Ascending aorta (tissue), 2 donors: ENCODE measurements at regions of chr17 and their contacts with region 1.

Region 1: GRCh38 chr17:81294856-81295680 is at the start of gene SLC38A10:
- DNase-seq: peak; percentile 70 to 95
- H3K4me3 ChIP-seq: peak within 1 kb of the TSS; percentile 84 to 99
- H3K27ac ChIP-seq: peak within 1 kb of the TSS; percentile 88 to 97
- H3K4me1 ChIP-seq: peaks cover 12 to 20% of the 10 kb centered on the region in 2 donors
- H3K27me3 ChIP-seq: no peaks in the 10 kb centered on the region
- CTCF ChIP-seq: no peak
- total RNA-seq, gene SLC38A10: 261 TPM

Region 2: GRCh38 chr17:81253358-81254131 is 41.5 kb before region 1 on chr17:
- intact Hi-C with region 1: loop called (anchors 5 kb)
- DNase-seq: no peak
- H3K4me3 ChIP-seq: no peak overlapping the region
- H3K27ac ChIP-seq: no peak overlapping the region
- H3K4me1 ChIP-seq: peaks cover 0 to 13% of the 10 kb centered on the region in 2 donors
- H3K27me3 ChIP-seq: no peaks in the 10 kb centered on the region
- CTCF ChIP-seq: peak; percentile 75 to 82 (median 76)

Region 3: DNA sequence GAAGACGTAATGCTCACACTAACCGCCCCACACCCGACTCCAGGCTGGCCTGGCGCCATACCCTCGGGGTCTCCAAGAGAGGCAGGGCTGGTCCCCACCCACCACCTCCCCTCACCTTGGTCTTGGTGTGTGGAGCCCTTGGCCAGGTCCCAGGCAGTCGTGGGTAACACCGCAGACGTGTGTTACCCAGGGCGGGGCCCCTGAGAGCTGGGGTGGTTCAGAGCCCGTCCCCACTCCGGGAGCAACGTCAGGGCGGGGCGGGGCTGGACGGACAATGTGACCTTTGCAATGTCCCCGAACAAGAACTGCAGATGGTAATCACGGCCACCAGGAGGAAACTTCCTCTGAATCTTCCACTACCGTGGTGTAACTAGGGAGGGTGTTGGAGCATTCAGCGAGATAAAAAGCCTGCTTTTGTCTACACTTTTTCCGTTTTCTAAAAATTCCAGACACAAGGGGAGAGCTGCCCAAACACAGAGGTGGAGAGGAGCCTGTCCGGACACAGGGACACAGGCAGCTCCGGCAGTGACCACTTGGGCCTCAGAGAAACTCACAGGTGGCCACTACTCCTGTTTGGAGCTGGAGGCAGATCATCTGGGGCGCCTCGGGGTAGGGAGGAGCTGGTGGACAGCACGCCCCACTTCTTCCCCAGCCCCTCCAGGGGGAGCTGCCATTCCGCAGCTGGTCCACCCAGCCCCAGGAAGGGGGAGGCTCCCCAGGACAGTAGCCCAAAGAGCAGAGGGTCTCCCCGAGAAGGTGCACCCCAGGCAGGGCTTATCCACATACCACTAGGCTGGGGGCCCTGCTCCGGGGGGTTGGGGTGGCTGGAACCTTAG is 14.2 kb after region 1 on chr17:
- intact Hi-C with region 1: no loop called
- DNase-seq: peak; percentile 54 to 91
- H3K4me3 ChIP-seq: peak overlapping the region; percentile 16 to 42
- H3K27ac ChIP-seq: peak overlapping the region in 1 of 2 donors; percentile 62
- H3K4me1 ChIP-seq: peaks cover 0 to 8% of the 10 kb centered on the region in 2 donors
- H3K27me3 ChIP-seq: no peaks in the 10 kb centered on the region
- CTCF ChIP-seq: peak; percentile 44 to 54 (median 45)

Region 4: DNA sequence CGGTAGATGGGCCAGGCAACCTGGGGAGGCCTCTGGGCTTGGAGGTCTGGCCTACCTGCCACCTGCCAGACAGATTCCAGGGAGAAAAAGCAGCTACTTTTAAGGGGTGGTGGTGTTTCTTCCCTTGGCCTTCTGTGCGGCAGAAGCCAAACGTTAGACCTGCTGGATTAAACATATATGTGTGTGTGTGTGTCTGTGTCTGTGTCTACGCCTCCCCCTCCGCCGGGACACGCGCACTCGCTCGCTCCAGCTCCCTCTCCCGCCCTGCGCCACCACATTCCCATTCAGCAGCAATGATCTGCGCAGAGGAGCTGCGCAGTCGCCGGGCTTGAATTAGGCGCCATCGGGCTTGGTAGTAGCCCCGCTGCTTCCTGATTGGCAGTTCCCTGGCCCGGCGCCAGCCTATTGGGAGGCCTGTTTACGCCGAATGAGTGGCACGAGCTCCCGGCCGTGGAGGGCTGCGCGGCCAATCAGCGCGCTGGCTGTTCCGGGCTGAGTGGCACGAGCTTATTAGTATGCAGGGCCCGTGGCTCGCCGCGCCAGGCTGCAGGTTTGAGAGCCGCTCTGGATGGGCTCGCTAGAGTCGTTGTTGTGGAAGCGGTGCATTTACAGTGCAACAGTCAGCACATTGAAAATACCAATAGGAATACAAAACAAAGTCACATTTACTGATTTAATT is 100.0 kb after region 1 on chr17 and contains the start of gene BAHCC1:
- intact Hi-C with region 1: loop called (anchors 2 kb)
- DNase-seq: peak; percentile 100
- H3K4me3 ChIP-seq: peak within 1 kb of the TSS; percentile 81 to 93
- H3K27ac ChIP-seq: peak within 1 kb of the TSS; percentile 94 to 97
- H3K4me1 ChIP-seq: peaks cover 14 to 22% of the 10 kb centered on the region in 2 donors
- H3K27me3 ChIP-seq: no peaks in the 10 kb centered on the region
- CTCF ChIP-seq: no peak
- total RNA-seq, gene BAHCC1: 29.1 TPM